ENCODE measurements at regions of chr9 and their contacts with region 1.

Region 1: GRCh38 chr9:27247756-27248155 is 49.2 kb downstream of the EQTN start:
- DNase-seq: peak; percentile 28
- ATAC-seq: peak; percentile 90
- H3K4me3 ChIP-seq: no peak overlapping the region
- H3K27ac ChIP-seq: no peak overlapping the region
- H3K4me1 ChIP-seq: no peaks in the 10 kb centered on the region
- H3K27me3 ChIP-seq: no peaks in the 10 kb centered on the region; a peak in 1 of 5 replicates
- CTCF ChIP-seq: peak; percentile 60
- EP300 ChIP-seq: no peak
- POLR2A ChIP-seq: no peak
- RAD21 ChIP-seq: no peak

Region 2: DNA sequence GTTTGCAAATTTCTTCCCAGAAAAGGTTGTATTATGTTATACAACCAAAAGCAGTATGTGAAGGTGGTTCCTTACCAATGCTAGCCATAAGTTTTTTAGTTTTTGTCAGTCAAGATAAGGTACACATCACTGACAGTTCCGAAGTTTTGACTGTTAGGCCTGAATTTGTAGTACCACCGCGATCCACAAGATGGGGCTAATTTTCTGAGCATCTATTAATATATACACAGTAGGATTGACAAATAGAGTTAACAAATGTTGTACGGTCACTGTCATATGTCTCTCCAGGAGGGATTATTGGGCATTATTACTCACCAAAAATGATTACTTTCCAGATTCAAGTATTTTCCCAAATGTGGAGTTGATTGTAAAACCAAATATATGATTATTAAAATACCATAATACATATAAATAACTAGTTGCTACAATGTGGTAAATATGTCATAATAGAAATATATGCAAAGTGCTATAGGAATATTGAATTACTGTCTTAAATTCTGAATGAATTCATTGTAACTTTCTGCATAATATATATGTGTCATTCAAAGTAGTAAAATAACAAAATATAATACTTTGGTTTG is 213.8 kb before region 1 on chr9:
- CTCF ChIA-PET with region 1: no interaction called
- POLR2A ChIA-PET with region 1: no interaction called
- in situ Hi-C with region 1: no loop called
- intact Hi-C with region 1: loop called (anchors 10 kb)
- DNase-seq: peak; percentile 30
- ATAC-seq: peak; percentile 79
- H3K4me3 ChIP-seq: no peak overlapping the region
- H3K27ac ChIP-seq: no peak overlapping the region
- H3K4me1 ChIP-seq: no peaks in the 10 kb centered on the region
- H3K27me3 ChIP-seq: no peaks in the 10 kb centered on the region
- CTCF ChIP-seq: peak; percentile 70
- EP300 ChIP-seq: no peak
- POLR2A ChIP-seq: no peak
- RAD21 ChIP-seq: peak; percentile 39; the same call in 1 of the 2 replicates

Region 3: DNA sequence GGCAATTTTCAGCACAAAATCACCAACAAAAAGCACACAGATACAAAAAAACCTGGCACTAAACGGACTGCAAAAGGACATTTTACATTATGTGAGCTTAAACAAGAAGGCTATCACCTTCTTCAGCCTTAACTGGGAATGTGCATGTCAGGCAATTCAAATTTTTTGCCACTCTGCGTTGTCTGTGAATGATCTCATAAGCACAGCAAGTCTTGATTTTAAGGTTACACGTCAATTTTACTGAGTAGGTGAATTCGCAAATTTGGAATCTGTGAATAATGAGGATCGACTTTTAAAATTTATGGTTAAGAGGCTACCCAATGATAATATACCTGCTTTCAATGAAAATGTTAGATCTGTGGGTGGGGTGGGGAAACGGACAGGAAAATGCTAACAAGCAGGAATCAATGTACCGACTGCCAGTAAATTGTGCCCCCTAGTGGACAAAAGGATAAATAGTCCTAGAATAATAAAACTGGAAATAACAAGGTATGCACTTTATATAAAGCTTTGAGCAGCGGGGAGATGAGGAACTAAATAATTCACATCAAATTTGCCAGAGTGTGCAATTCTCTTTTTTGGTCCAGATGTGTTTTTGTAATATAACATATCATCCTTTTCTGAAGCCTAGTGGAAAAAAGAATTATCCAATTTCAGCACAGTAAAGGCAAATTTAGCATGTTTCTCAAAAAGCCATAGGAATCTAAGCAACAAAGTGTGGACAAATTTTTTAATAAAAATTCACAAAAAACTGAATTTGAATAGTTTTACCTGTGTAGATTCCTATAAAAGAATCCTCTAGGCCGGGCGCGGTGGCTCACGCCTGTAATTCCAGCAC is 28.7 kb after region 1 on chr9:
- CTCF ChIA-PET with region 1: interaction called, 20 read pairs
- POLR2A ChIA-PET with region 1: no interaction called
- in situ Hi-C with region 1: no loop called
- intact Hi-C with region 1: loop called (anchors 2 kb)
- DNase-seq: peak; percentile 45
- ATAC-seq: peak; percentile 74
- H3K4me3 ChIP-seq: no peak overlapping the region
- H3K27ac ChIP-seq: no peak overlapping the region
- H3K4me1 ChIP-seq: peaks cover 5% of the 10 kb centered on the region; the same call in 1 of the 2 replicates
- H3K27me3 ChIP-seq: peaks cover 1 to 10% of the 10 kb centered on the region in 2 experiments; a peak in 2 of 5 replicates
- CTCF ChIP-seq: peak; percentile 73
- EP300 ChIP-seq: no peak
- POLR2A ChIP-seq: no peak
- RAD21 ChIP-seq: no peak

Region 4: GRCh38 chr9:27505744-27506161 is 258.0 kb after region 1 on chr9:
- CTCF ChIA-PET with region 1: no interaction called
- POLR2A ChIA-PET with region 1: no interaction called
- in situ Hi-C with region 1: no loop called
- intact Hi-C with region 1: no loop called
- DNase-seq: no peak
- ATAC-seq: no peak
- H3K4me3 ChIP-seq: no peak overlapping the region
- H3K27ac ChIP-seq: no peak overlapping the region
- H3K4me1 ChIP-seq: no peaks in the 10 kb centered on the region
- H3K27me3 ChIP-seq: peaks cover 0 to 5% of the 10 kb centered on the region in 2 experiments; a peak in 2 of 5 replicates
- CTCF ChIP-seq: no peak
- EP300 ChIP-seq: no peak
- POLR2A ChIP-seq: no peak
- RAD21 ChIP-seq: no peak

Region 5: DNA sequence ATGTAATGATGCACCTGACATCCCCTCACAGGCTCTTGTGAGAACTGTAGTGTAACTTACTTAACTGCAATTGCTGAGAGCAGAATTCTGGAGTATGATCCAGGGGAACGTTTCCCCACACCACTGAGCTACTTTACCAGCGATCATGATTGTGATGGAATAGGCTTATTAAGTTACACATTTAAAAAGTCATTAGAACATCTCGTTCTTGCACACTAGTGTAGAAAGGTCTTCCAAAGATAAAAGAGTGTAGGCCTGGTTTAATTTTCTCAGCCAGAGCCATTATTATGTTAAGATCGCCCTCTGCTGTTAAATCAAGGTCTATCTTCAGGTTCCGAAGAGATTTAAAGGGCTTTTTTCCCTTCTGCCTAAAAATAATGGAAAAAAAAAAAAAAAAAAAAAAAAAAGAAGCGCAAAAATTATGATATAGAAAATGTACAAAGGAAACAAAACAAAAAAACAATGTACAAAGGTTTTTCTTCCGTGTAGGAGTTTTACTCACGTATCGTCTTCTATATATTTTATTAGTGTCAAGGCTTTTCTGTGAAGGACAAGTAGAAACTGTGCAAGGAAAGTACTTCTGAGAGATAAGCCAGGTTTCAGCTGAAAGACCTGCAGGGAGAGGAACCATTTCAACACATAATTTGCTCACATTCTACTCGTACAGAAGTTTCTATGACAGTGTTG is 300.4 kb after region 1 on chr9:
- CTCF ChIA-PET with region 1: no interaction called
- POLR2A ChIA-PET with region 1: no interaction called
- in situ Hi-C with region 1: no loop called
- intact Hi-C with region 1: loop called (anchors 5 kb)
- DNase-seq: no peak
- ATAC-seq: peak; percentile 64; the same call in 2 of the 3 replicates
- H3K4me3 ChIP-seq: no peak overlapping the region
- H3K27ac ChIP-seq: no peak overlapping the region
- H3K4me1 ChIP-seq: no peaks in the 10 kb centered on the region
- H3K27me3 ChIP-seq: no peaks in the 10 kb centered on the region
- CTCF ChIP-seq: peak; percentile 56
- EP300 ChIP-seq: no peak
- POLR2A ChIP-seq: no peak
- RAD21 ChIP-seq: no peak